ENCODE measurements at regions of chr19 and their contacts with region 1.

Region 1: GRCh38 chr19:2427429-2428320 is at the start of gene TIMM13:
- DNase-seq: peak; percentile 96
- H3K4me3 Mint-ChIP-seq: peak within 1 kb of the TSS; percentile 95
- H3K27ac Mint-ChIP-seq: peak within 1 kb of the TSS; percentile 98
- H3K4me1 Mint-ChIP-seq: peaks cover 11% of the 10 kb centered on the region
- H3K27me3 Mint-ChIP-seq: peaks cover 2% of the 10 kb centered on the region
- total RNA-seq, gene TIMM13: 178 and 185 TPM in 2 replicates

Region 2: DNA sequence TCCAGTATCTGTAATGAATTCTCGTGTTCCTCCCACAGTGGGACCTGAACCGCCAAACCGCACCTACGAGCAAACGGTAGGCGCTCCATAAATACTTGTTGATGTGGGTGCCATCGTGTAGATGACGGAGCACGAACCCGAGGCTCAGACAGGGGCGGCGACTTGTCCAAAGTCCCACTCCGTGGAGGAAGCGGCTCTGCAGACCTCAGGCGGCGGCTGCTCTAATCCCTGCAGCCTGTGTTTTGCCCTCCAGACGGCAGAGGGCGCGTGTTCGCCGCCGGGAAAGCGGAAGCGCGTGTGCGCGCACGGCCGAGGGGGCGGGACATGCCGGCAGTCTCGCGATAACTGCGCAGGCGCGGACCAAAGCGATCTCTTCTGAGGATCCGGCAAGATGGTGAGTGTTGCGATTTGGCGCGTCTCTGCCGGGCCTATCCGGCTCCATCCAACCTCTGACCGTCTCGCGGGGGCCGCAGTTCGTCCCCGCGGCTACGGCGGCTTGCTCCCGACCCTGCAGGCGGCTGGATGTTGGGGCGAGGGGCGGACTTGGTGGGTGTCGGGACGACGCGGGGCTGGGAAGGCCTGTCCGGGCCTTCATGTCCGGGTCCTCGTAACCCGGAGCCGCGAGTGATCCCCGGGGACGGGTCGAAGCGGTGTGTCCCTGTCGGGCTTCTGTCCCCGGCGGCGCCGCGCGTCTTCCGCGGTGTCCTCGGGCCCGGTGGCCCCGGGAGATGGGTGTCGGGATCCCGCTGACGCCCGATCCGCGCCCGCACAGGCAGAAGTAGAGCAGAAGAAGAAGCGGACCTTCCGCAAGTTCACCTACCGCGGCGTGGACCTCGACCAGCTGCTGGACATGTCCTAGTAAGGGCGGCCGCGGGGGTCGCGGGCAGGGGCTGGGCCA is 989.4 kb before region 1 on chr19 and contains the start of gene RPS15:
- intact Hi-C with region 1: loop called (anchors 2 kb)
- DNase-seq: peak; percentile 95
- H3K4me3 Mint-ChIP-seq: peak within 1 kb of the TSS; percentile 98
- H3K27ac Mint-ChIP-seq: peak within 1 kb of the TSS; percentile 99
- H3K4me1 Mint-ChIP-seq: no peaks in the 10 kb centered on the region
- H3K27me3 Mint-ChIP-seq: no peaks in the 10 kb centered on the region
- total RNA-seq, gene RPS15: 1,387 and 1,455 TPM in 2 replicates

Region 3: GRCh38 chr19:2236314-2237050 is 191.2 kb before region 1 on chr19 and contains the starts of genes PLEKHJ1 and SF3A2:
- intact Hi-C with region 1: loop called (anchors 1 kb)
- DNase-seq: peak; percentile 97
- H3K4me3 Mint-ChIP-seq: peak within 1 kb of the TSS; percentile 97
- H3K27ac Mint-ChIP-seq: peak within 1 kb of the TSS; percentile 96
- H3K4me1 Mint-ChIP-seq: peaks cover 56% of the 10 kb centered on the region
- H3K27me3 Mint-ChIP-seq: peaks cover 4% of the 10 kb centered on the region
- total RNA-seq, gene PLEKHJ1: 67.5 and 68.2 TPM in 2 replicates
- total RNA-seq, gene SF3A2: 153 and 169 TPM in 2 replicates

Region 4: DNA sequence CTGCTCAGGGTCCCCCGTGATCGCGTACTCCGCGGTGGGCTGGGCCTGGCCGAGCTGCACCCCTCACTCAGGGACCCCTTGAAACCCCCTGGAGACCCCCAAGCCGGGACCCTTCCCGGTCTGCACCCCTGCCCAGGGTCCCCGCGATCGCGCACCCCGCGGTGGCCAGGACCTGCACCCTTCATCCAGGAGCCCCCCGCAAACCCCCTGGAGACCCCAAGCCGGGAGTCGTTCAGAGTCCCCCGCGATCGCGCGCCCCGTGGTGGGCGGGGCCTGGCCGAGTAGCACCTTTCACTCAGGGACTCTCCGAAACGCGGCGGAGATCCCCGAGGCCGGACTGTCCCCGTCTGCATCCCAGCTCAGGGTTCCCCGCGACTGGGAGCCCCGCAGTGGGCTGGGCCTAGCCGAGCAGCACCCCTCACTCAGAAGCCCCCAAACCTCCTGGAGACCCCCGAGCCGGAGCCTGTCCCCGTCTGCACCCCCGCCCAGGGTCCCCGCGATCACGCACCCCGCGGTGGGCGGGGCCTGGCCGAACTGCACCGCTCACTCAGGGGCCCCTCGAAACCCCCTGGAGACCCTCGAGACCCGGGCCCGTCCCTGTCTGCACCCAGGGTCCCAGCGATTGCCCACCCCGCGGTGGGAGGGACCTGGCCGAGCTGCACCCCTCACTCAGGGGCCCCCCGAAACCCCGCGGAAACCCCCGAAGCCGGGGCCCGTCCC is 28.3 kb after region 1 on chr19:
- intact Hi-C with region 1: loop called (anchors 1 kb)
- DNase-seq: peak; percentile 37
- H3K4me3 Mint-ChIP-seq: peak overlapping the region; percentile 87
- H3K27ac Mint-ChIP-seq: peak overlapping the region; percentile 84
- H3K4me1 Mint-ChIP-seq: peaks cover 25% of the 10 kb centered on the region
- H3K27me3 Mint-ChIP-seq: no peaks in the 10 kb centered on the region

Region 5: DNA sequence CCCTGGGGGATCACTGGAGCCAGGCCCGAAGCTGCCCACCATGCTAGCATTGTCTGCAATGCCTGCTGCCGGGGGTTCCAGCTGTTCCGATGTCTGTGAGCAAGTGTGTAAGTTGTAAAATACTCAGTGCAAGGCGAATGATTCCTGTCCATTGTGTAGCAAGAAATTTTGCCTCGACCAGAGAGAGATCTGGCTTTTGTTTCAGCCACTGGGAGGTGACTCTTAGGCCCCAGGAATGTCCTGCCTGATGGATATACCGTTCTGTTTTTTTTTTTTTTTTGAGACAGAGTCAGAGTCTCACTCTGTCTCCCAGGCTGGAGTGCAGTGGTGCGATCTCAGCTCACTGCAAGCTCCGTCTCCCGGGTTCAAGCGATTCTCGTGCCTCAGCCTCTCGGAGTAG is 40.9 kb after region 1 on chr19:
- intact Hi-C with region 1: no loop called
- DNase-seq: no peak
- H3K4me3 Mint-ChIP-seq: no peak overlapping the region
- H3K27ac Mint-ChIP-seq: no peak overlapping the region
- H3K4me1 Mint-ChIP-seq: peaks cover 10% of the 10 kb centered on the region
- H3K27me3 Mint-ChIP-seq: no peaks in the 10 kb centered on the region

Region 6: DNA sequence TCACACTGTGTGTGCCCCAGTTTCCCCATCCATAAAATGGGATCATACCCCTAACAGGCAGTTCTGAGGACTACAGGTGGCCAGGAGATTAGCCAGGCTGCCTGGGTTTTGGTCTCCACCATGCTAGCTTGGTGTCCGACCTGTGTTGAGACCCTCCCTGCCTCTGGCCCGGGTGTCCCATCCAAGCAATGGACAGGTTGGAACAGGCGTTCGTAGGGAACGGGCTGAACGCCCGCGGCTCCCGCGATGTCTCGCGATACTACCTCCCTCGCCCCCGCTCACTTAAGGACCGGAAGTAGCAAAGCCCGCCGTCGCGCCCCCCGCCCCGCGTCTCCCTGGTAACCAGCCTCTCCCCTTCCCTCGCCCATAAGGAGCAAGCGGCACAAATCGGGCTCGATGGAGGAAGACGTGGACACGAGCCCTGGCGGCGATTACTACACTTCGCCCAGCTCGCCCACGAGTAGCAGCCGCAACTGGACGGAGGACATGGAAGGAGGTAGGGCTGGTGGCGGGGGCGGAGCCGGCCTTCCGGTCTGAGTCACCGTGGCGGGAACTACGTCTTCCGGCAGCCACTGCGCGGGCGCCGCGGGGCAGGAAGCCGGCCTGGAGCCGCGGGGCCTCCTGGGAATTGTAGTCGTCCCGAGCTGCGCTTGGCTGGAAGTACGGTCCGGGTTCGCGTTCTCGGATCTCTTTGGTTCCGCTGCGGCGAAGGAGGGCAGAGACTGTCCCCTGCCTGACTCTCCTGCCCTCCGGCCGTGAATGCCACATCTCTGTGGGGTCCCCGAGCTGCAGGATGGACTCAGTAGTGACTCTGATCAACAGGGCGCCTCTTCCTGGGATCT is 1007.3 kb after region 1 on chr19:
- intact Hi-C with region 1: loop called (anchors 5 kb)
- DNase-seq: peak; percentile 95
- H3K4me3 Mint-ChIP-seq: peak overlapping the region; percentile 95
- H3K27ac Mint-ChIP-seq: peak overlapping the region; percentile 97
- H3K4me1 Mint-ChIP-seq: peaks cover 6% of the 10 kb centered on the region
- H3K27me3 Mint-ChIP-seq: peaks cover 5% of the 10 kb centered on the region

Measured in activated T-helper 1 cell treated with anti-CD3 and anti-CD28 coated beads, Interleukin-12 subunit alpha, Interleukin-12 subunit beta, Interleukin-2, Interleukin-4 antibody, amounts not matched to agents 30 ng/mL and 10 ng/mL and 1 ng/mL, durations not matched to agents 14 hours and 24 hours and 36 hours (primary cell).